PC-9 (cell line): ENCODE measurements at regions of chr15 and their contacts with region 1.

Region 1: GRCh38 chr15:58569455-58569854 is 137.7 kb downstream of the LIPC start:
- DNase-seq: no peak
- H3K4me3 ChIP-seq: no peak overlapping the region
- H3K27ac ChIP-seq: no peak overlapping the region
- H3K4me1 ChIP-seq: peaks cover 10% of the 10 kb centered on the region
- H3K27me3 ChIP-seq: no peaks in the 10 kb centered on the region
- CTCF ChIP-seq: no peak

Region 2: GRCh38 chr15:58590926-58591325 is 21.5 kb after region 1 on chr15:
- CTCF ChIA-PET with region 1: no interaction called
- POLR2A ChIA-PET with region 1: interaction called, 14 read pairs
- intact Hi-C with region 1: no loop called
- DNase-seq: no peak
- H3K4me3 ChIP-seq: no peak overlapping the region
- H3K27ac ChIP-seq: no peak overlapping the region
- H3K4me1 ChIP-seq: no peaks in the 10 kb centered on the region
- H3K27me3 ChIP-seq: no peaks in the 10 kb centered on the region
- CTCF ChIP-seq: no peak